Psoas muscle (tissue), 8 donors: ENCODE measurements at regions of chr2 and their contacts with region 1.

Region 1: DNA sequence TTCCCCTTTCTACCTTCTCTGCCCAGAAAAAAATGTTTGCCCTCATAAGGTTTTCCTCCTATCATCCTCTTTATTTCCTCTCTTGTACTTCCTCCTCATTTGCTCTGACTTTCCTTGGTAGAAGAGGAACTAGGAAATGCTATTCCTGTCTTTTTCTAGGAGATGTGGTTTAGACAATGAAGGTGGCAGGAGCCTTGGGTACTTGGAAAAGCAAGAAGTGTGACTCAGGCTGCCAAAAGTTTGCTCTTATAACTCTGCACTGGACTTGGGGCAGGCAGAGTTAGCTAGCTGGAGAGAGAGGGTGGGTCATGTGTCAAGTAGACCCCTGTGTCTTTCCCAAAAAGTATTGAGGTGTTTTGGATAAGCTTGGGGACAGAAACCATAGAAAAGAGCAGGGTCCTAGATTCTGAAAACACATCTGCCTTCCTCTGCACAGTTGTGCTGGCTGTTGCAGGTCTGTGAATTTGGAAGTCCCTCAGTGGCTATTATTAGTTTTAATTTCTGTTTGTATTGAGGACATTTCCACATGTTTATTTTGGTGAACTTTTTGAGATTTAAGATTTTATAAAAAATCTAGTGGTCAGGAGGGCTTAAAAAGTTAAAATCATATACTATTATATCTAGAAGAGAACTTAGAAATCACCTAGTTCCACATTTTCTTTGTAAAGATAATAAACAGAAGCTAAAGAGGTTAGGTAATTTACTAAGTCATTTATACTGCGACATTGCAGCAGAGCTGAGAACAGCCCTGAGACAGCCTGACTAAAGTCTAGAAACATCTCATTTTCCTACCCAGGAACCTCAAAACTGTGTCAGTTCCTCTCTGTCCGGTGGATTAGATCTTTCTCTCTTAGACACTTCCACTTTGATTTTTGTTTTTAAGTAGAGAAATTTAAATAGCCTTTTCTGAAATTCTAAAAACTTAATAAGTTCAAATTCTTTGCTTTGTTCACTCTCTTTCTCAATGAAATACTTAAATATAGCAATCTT is 16.0 kb downstream of the INSIG2 start:
- DNase-seq: no peak
- ATAC-seq: no peak
- H3K4me3 ChIP-seq: no peak overlapping the region
- H3K27ac ChIP-seq: no peak overlapping the region
- H3K4me1 ChIP-seq: no peaks in the 10 kb centered on the region
- H3K27me3 ChIP-seq: no peaks in the 10 kb centered on the region
- CTCF ChIP-seq: no peak

Region 2: GRCh38 chr2:118080465-118080864 is 23.8 kb before region 1 on chr2:
- intact Hi-C with region 1: loop called in 1 of 2 experiments (anchors 2 kb)
- DNase-seq: no peak
- ATAC-seq: no peak
- H3K4me3 ChIP-seq: no peak overlapping the region
- H3K27ac ChIP-seq: no peak overlapping the region
- H3K4me1 ChIP-seq: no peaks in the 10 kb centered on the region
- H3K27me3 ChIP-seq: no peaks in the 10 kb centered on the region
- CTCF ChIP-seq: no peak

Region 3: DNA sequence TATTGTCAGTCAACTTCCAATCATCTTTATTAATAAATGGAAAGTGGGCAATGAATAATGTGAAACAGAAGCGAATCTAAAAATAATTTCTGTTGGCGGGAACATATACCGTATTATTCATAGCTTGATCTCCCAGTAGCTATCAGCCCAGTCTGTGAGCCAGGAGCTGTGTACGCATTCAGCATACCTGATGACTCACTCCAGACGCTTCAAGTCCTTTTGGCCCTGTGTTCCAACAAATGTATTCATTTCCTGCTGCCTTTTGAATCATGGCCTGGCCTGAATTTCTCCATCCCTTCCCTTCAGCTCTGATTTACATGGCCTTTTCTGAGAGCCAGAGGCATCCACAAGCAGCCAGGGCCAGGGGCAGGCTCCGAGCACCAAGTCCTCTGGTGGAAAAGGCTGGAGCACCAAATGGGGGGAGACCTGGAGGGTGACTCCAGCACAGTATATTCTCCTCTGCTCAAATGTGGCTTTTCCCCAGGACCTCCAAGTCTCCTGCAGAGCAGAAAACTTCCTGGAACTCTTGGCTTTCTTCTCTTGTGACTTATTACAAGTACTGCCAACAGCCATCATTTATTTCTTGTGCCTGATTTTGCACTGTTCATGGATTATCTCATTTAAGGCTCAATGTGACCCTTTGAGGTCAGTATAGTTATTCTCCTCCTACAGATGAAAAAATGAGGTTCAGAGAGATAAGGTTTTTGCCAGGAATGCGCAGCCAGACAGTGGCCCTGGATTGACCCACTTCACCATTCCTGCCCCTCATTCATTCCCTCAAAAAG is 634.5 kb after region 1 on chr2:
- intact Hi-C with region 1: no loop called
- DNase-seq: peak in 1 of 2 donors; percentile 52
- ATAC-seq: peak; percentile 65 to 98 (median 92)
- H3K4me3 ChIP-seq: no peak overlapping the region
- H3K27ac ChIP-seq: no peak overlapping the region
- H3K4me1 ChIP-seq: no peaks in the 10 kb centered on the region
- H3K27me3 ChIP-seq: peaks cover 0 to 2% (median 0%) of the 10 kb centered on the region in 3 donors
- CTCF ChIP-seq: no peak